Posterior vena cava (tissue), 2 donors: ENCODE measurements at regions of chr17 and their contacts with region 1.

Region 1: DNA sequence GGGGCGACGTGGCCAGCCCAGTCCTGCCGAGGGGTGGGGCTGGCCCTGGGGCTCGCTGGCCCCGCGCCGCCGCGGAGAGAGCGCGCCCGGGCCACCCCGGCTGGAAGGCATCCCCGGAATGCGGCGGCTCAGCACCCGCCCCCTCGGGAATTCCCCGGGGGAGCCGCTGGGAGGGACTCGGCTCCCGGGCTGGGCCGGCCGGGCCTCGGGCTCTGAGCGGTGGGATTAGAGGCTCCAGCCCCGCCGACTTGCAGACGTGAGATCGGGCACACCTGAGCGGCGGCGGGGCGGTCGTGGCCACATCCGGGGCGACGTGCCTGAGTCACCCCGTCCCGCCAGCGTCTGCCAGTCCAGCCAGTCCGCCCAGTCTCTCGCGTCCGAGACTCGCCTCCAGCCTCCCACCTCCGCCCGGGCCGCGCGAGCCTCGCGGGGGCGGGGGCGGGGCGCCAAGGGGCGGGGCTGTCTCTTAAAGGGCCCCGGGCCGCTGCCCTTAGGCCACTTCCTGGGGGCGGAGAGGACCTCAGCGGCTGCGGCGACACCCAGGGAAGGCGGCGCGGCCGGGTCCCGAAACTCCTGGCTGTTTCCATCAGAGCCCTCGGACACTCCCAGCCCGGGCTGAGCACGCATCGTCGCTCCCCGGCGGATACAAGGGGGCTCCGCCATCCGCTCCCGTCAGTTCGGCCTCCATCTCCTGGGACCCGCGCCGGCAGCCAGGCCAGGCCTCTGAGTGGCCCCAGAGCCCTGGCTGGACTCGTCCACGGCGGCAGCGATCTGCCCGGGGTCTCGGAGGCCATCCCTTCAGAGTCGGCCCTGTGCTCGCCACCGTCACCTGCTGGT is at the start of gene KCTD11:
- DNase-seq: peak; percentile 98
- total RNA-seq, gene KCTD11: 8.8 to 10.0 TPM

Region 2: GRCh38 chr17:7252176-7253043 is 99.5 kb before region 1 on chr17 and contains the start of gene ELP5:
- intact Hi-C with region 1: loop called in 1 of 2 experiments (anchors 5 kb)
- DNase-seq: peak; percentile 99
- total RNA-seq, gene ELP5: 36.5 to 40.0 TPM

Region 3: DNA sequence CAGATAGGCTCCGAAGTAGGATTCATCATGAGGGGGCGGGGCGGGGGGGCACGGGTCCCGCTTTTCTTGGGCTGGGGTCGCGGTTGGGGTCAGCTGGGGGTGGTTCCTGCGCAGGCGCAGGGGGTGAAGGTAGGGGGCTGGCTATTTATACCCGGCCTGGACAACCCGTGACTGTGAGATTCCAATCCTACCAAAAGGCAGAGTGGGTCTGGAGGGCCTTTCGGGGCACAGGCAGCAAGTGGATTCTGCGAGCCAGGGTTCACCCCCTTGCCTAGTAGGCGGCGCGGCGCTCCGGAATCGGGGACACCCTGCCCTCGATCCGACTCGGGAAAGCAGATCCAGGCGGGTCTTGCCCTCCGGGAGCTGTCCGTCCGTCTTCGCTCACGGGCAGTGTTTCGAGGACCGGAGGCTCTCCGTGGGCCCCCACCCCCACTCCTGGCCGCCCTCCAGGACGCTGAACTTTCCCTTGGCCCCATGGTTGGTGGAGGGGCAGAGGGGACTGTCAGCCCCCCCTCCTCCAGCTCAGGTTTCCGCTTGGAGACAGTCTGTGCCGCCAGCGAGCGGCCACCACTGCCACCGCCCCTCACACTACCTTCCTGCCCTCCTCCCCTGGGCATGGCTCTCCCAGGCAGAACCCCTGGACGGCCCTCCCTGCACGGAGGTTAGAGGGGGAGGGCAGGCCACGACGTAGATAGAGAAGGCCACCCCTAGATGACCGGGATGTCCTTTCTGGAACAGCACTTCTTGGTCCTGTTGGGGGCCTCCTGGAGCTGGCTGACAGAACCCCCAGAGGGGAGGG is 69.7 kb before region 1 on chr17:
- intact Hi-C with region 1: no loop called
- DNase-seq: no peak

Region 4: GRCh38 chr17:7296189-7296902 is 55.5 kb before region 1 on chr17:
- intact Hi-C with region 1: loop called in 1 of 2 experiments (anchors 10 kb)
- DNase-seq: peak; percentile 95

Region 5: GRCh38 chr17:7435221-7435675 is 83.4 kb after region 1 on chr17 and contains the start of gene TMEM102:
- intact Hi-C with region 1: loop called in 1 of 2 experiments (anchors 10 kb)
- DNase-seq: peak; percentile 97
- total RNA-seq, gene TMEM102: 1.8 to 3.0 TPM

Region 6: DNA sequence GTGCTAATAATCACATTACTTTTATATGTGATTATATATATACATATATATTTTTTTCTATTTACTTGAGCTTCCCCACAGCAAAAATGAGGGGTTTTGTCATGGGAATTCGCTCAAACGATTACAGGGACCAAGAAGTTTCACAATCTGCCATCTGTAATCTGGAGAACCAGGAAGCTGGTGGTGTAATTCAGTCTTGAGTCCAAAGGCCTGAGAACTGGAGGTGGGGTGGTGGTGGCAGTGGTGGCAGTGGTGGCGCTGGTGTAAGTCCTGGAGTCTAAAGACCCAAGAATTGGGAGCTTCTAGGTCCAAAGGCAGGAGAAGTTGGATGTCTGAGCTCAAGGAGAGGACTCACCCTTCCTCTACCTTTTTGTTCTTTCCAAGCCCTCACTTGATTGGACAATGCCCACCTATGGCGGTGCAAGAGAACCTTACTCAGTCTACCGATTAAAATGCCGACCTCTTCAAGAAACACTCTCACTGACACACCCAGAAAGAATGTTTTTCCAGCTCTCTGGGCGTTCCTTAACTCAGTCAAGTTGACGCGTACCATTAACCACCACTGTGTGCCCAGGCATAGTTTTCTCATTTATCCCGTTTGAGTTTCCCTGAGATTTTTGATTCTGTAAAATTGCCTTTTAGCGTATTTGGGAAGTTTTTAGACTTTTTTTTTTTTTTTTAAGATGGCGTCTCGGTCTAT is 164.2 kb after region 1 on chr17:
- intact Hi-C with region 1: loop called in 1 of 2 experiments (anchors 5 kb)
- DNase-seq: no peak

Region 7: DNA sequence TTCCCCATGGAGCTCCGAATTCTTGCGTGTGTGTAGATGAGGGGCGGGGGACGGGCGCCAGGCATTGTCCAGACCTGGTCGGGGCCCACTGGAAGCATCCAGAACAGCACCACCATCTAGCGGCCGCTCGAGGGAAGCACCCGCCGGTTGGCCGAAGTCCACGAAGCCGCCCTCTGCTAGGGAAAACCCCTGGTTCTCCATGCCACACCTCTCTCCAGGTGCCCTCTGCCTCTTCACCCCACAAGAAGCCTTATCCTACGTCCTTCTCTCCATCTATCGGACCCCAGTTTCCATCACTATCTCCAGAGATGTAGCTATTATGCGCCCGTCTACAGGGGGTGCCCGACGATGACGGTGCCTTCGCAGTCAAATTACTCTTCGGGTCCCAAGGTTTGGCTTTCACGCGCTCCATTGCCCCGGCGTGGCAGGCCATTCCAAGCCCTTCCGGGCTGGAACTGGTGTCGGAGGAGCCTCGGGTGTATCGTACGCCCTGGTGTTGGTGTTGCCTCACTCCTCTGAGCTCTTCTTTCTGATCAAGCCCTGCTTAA is 209.2 kb after region 1 on chr17:
- intact Hi-C with region 1: loop called in 1 of 2 experiments (anchors 10 kb)
- DNase-seq: peak; percentile 97